Left cardiac atrium (tissue), 4 donors: ENCODE measurements at regions of chr22 and their contacts with region 1.

Region 1: GRCh38 chr22:22942511-22943329 is 55.1 kb downstream of the IGLL5 start:
- DNase-seq: peak; percentile 66
- ATAC-seq: peak in 1 of 2 donors; percentile 57

Region 2: DNA sequence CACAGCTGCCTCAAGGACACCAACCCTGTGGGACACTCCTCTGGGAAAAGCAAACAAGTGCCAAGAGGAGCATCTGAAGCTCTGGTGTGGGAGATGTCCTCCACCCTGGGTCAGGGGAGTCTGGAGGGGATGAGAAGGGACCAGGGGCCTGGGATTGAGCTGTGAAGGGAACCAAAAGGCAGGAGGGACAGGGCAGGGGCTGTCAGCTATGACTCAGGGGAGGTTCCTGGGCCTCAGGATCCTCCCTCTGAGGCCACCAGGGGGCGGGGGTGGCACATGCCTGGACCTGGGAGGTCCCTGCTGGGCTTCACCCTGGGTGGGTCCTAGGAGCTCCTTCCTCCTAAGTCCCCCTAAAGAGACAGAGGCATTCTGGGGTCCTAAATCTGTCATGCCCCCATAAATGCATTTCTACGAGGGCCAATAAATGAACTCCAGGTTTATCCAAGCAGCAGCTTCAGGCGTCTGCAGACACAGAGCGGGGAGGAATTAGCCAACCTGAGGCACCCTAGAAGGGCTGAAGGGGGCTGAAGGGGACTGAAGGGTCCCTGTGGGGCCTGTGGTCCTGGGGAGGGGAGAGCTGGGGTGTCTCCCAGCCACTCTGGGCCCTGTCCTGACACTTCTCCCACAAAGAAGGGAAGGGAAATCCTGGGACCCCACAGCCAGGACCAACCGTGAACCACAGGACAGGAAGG is 87.0 kb before region 1 on chr22:
- intact Hi-C with region 1: loop called in 1 of 2 experiments (anchors 10 kb)
- DNase-seq: no peak
- ATAC-seq: no peak